ENCODE measurements at regions of chr2 and their contacts with region 1.

Region 1: GRCh38 chr2:102615622-102616436 is 3.5 kb upstream of the SLC9A2 start:
- DNase-seq: no peak
- H3K4me3 Mint-ChIP-seq: no peak overlapping the region
- H3K27ac Mint-ChIP-seq: no peak overlapping the region
- H3K4me1 Mint-ChIP-seq: peaks cover 9% of the 10 kb centered on the region
- H3K27me3 Mint-ChIP-seq: peaks cover 56% of the 10 kb centered on the region

Region 2: DNA sequence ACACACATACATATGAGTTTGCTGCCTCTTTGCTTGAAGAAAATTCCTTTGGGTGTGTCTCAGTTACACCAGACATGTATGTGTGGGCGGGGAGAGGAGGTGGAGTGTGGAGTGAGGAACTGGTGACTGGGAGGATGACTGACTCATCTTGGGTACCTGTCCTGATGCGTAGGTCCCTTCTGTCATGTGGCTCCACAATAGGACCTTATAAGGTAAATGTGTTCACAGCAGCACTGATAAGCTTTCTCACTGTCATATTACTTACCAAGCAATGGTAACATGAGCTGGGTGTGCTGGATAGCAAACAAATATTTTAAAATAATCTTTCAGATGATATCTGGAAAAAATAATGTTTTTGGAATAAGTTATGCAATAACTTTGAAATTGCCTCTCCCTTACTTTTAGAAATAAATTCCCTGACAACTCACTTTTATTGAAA is 48.7 kb after region 1 on chr2:
- intact Hi-C with region 1: loop called (anchors 5 kb)
- DNase-seq: peak; percentile 27
- H3K4me3 Mint-ChIP-seq: no peak overlapping the region
- H3K27ac Mint-ChIP-seq: peak overlapping the region; percentile 70
- H3K4me1 Mint-ChIP-seq: peaks cover 29% of the 10 kb centered on the region
- H3K27me3 Mint-ChIP-seq: peaks cover 2% of the 10 kb centered on the region

Region 3: DNA sequence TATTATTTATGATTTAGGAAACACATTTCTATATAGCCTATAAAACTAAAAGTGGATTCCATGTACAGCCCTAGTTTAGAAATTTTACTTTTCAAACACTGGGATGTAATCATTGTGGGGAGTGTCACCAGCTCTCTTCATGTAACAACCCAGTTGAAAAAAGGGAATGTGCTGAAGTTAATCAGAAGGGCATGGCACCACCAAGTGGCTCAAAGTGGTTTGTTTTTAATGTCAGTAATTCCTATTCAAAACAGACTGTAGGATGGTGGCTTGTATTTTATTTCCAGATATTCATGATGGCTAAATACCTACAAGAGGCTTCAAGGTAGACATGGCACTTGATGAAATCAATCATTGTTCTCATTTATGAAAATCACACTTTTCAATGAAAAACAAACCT is 87.9 kb after region 1 on chr2:
- intact Hi-C with region 1: loop called (anchors 5 kb)
- DNase-seq: no peak
- H3K4me3 Mint-ChIP-seq: no peak overlapping the region
- H3K27ac Mint-ChIP-seq: no peak overlapping the region
- H3K4me1 Mint-ChIP-seq: no peaks in the 10 kb centered on the region
- H3K27me3 Mint-ChIP-seq: peaks cover 17% of the 10 kb centered on the region

Region 4: GRCh38 chr2:102992607-102993006 is 376.8 kb after region 1 on chr2:
- intact Hi-C with region 1: no loop called
- DNase-seq: no peak
- H3K4me3 Mint-ChIP-seq: no peak overlapping the region
- H3K27ac Mint-ChIP-seq: no peak overlapping the region
- H3K4me1 Mint-ChIP-seq: no peaks in the 10 kb centered on the region
- H3K27me3 Mint-ChIP-seq: no peaks in the 10 kb centered on the region

Measured in activated T-helper 1 cell treated with anti-CD3 and anti-CD28 coated beads, Interleukin-12 subunit alpha, Interleukin-12 subunit beta, Interleukin-2, Interleukin-4 antibody, amounts not matched to agents 30 ng/mL and 10 ng/mL and 1 ng/mL, durations not matched to agents 14 hours and 24 hours and 36 hours (primary cell).